Activated CD4-positive, alpha-beta memory T cell treated with anti-CD3 and anti-CD28 coated beads for 36 hours (primary cell): ENCODE measurements at regions of chr10 and their contacts with region 1.

Region 1: DNA sequence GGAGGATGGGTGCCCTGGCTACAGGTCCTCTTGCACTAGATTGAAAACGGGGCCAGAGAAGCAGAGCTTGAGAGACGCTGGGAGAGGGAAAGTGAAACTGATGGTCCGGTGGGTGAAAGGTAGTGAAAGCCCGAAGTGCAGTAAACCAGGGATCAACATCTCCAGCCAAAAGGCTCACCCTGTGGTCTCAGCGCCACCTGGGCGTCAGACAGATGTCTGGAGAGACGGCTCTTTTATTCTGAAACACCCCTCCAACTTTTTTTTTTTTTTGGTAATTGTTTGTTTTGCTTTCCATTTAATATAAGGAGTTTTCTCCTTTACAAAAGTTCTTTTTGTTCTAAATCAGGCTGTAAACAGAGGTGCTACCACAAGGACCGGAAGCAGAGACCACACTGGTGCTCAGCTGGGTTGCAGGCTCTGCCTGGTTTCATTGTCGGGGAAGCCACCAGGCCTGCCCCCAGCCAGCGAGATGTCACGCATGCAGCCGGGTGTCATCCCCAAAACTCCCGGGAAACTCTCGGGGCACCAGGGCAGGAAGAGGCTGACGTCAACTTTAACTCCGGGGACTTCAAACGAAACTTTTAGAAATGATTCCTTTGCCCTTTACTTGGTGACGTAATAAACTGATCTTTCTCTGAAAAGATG is 11.2 kb downstream of the IL2RA start:
- DNase-seq: peak; percentile 97
- H3K4me3 Mint-ChIP-seq: peak overlapping the region; percentile 83
- H3K27ac Mint-ChIP-seq: peak overlapping the region; percentile 98
- H3K4me1 Mint-ChIP-seq: peaks cover 86% of the 10 kb centered on the region
- H3K27me3 Mint-ChIP-seq: no peaks in the 10 kb centered on the region

Region 2: GRCh38 chr10:5293691-5294550 is 757.0 kb before region 1 on chr10:
- CTCF ChIA-PET with region 1: no interaction called
- POLR2A ChIA-PET with region 1: no interaction called
- intact Hi-C with region 1: loop called (anchors 10 kb)
- DNase-seq: peak; percentile 91
- H3K4me3 Mint-ChIP-seq: peak overlapping the region; percentile 86
- H3K27ac Mint-ChIP-seq: peak overlapping the region; percentile 95
- H3K4me1 Mint-ChIP-seq: peaks cover 79% of the 10 kb centered on the region
- H3K27me3 Mint-ChIP-seq: no peaks in the 10 kb centered on the region

Region 3: GRCh38 chr10:5889624-5890451 is 161.1 kb before region 1 on chr10 and contains the starts of genes ANKRD16 and FBH1:
- CTCF ChIA-PET with region 1: no interaction called
- POLR2A ChIA-PET with region 1: no interaction called
- intact Hi-C with region 1: loop called (anchors 5 kb)
- DNase-seq: peak; percentile 98
- H3K4me3 Mint-ChIP-seq: peak within 1 kb of the TSS; percentile 93
- H3K27ac Mint-ChIP-seq: peak within 1 kb of the TSS; percentile 80
- H3K4me1 Mint-ChIP-seq: peaks cover 50% of the 10 kb centered on the region
- H3K27me3 Mint-ChIP-seq: no peaks in the 10 kb centered on the region
- total RNA-seq, gene ANKRD16: 5.9 to 6.4 TPM
- total RNA-seq, gene FBH1: 57.8 to 63.4 TPM

Region 4: DNA sequence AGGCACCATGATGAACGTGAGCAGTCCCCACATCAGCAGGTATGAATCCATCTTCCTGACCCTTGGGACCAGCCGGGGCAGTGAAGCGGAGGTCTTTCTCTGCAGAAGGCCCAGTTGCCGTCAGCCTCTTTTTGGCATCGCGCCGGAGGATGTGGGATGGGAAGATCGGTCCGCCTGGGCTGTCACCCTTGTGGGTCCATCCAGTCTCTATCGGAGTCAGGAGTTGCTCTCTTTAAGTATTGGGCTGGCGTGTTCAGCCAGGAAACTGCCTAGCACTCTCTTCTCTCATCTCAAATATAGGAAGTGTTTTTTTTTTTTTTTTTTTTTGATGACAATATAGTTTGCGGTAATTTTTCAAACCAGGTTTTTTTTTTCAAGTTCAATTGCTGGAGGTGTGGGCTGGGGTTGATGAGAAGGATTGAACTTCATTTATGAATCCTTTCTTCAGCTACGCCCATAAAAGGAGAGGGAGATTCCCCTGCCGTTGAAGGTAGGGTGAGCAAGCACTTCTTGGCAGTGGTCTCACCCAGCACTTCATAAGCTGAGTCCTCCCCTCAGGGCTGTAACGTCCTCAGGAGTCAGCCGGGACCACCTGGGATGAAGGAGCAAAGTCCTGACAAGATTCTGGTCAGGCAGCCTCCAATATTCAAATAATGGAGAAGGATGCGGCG is 11.3 kb after region 1 on chr10 and contains the start of gene IL2RA:
- CTCF ChIA-PET with region 1: interaction called, 6 read pairs
- POLR2A ChIA-PET with region 1: interaction called, 343 read pairs
- intact Hi-C with region 1: loop called (anchors 1 kb)
- DNase-seq: peak; percentile 86
- H3K4me3 Mint-ChIP-seq: peak within 1 kb of the TSS; percentile 99
- H3K27ac Mint-ChIP-seq: peak within 1 kb of the TSS; percentile 99
- H3K4me1 Mint-ChIP-seq: peaks cover 62% of the 10 kb centered on the region
- H3K27me3 Mint-ChIP-seq: peaks cover 2% of the 10 kb centered on the region
- total RNA-seq, gene IL2RA: 961 to 988 TPM

Region 5: GRCh38 chr10:6088721-6089390 is 37.9 kb after region 1 on chr10 and contains the start of gene RBM17:
- CTCF ChIA-PET with region 1: interaction called, 167 read pairs
- POLR2A ChIA-PET with region 1: interaction called, 86 read pairs
- intact Hi-C with region 1: loop called (anchors 1 kb)
- DNase-seq: peak; percentile 98
- H3K4me3 Mint-ChIP-seq: peak within 1 kb of the TSS; percentile 90
- H3K27ac Mint-ChIP-seq: peak within 1 kb of the TSS; percentile 83
- H3K4me1 Mint-ChIP-seq: peaks cover 71% of the 10 kb centered on the region
- H3K27me3 Mint-ChIP-seq: no peaks in the 10 kb centered on the region
- total RNA-seq, gene RBM17: 151 to 155 TPM

Region 6: DNA sequence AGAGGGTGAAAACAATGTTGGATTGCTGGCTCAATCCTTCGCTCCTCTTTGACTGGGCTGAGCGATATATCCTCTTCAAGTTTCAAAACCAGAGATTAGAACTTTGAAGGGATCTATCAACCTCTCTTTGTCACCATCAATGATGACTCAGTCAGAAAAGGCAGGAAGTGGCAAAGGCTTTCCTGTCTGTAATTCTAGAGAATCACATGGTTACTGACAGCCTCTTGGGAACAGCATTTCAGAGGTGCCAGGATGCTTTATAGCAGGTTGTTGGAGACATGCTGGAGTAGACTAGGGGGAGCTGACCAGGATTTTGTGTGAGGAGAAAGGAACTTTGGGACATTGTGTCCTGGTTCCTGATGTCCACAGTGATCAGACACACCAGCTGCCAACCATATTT is 447.8 kb after region 1 on chr10:
- CTCF ChIA-PET with region 1: no interaction called
- POLR2A ChIA-PET with region 1: no interaction called
- intact Hi-C with region 1: loop called (anchors 10 kb)
- DNase-seq: peak; percentile 55
- H3K4me3 Mint-ChIP-seq: peak overlapping the region; percentile 36
- H3K27ac Mint-ChIP-seq: peak overlapping the region; percentile 93
- H3K4me1 Mint-ChIP-seq: peaks cover 53% of the 10 kb centered on the region
- H3K27me3 Mint-ChIP-seq: no peaks in the 10 kb centered on the region